Sigmoid colon (tissue), 7 donors: ENCODE measurements at regions of chr2 and their contacts with region 1.

Region 1: DNA sequence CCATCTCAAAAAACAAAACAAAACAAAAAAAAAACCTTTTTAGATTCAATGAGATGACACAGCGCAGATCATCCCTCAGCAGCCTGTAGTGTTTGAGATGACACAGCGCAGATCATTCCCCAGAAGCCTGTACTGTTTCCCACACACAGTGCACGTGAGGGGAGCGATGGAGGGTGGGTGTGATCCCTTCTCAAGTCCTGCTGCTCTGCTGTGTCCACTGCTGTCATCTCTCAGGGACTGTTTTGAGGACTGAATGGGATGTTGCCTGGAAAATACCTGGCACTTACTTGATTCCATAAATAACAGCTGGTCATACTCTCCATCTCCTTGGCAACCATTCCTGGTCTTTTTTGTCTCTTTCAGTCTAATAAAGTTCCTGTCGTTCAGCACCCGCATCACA is 25.7 kb downstream of the TGOLN2 start:
- DNase-seq: no peak
- H3K4me3 ChIP-seq: no peak overlapping the region
- H3K27ac ChIP-seq: peak overlapping the region in 1 of 4 donors; percentile 12
- H3K4me1 ChIP-seq: peaks cover 0 to 17% (median 5%) of the 10 kb centered on the region in 4 donors
- H3K27me3 ChIP-seq: no peaks in the 10 kb centered on the region
- CTCF ChIP-seq: no peak
- EP300 ChIP-seq: no peak
- POLR2A ChIP-seq: no peak

Region 2: GRCh38 chr2:85066874-85067351 is 235.2 kb before region 1 on chr2:
- intact Hi-C with region 1: loop called (anchors 1 kb)
- DNase-seq: peak; percentile 88
- H3K4me3 ChIP-seq: peak overlapping the region; percentile 15 to 44 (median 34)
- H3K27ac ChIP-seq: peak overlapping the region in 1 of 4 donors; percentile 31
- H3K4me1 ChIP-seq: peaks cover 0 to 13% (median 9%) of the 10 kb centered on the region in 4 donors
- H3K27me3 ChIP-seq: peaks cover 0 to 5% (median 0%) of the 10 kb centered on the region in 3 donors
- CTCF ChIP-seq: peak; percentile 53 to 86 (median 78)
- EP300 ChIP-seq: no peak
- POLR2A ChIP-seq: no peak